PC-9 (cell line): ENCODE measurements at regions of chr12 and their contacts with region 1.

Region 1: DNA sequence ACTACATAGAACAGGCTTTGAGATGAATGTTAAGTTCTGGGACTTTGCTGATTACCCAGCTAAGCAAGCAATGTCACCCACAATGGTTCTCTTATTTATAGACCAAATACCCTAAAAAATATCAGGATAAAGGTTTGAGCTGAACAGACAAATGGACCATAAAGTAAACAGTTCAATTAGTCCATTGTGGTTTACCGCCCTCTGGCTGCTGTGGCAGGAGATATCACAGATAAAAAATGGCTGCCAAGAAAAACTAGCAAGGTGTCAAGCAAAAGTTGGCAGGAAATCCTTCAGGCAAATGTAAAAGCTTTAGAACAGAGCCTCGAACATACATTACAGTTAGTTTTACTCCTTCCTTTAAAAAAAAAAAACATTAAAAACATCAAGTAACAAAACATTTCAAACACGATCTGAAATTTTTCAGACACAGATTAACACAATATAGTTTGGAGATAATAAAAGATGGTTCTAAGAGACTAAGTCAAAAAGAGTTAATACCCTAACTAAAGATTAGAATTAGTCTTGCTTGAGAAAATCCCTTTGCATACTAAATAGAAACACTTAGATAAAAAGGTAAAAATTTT is 41.3 kb downstream of the MED13L start:
- DNase-seq: peak in 1 of 2 experiments; percentile 11
- H3K4me3 ChIP-seq: no peak overlapping the region
- H3K27ac ChIP-seq: no peak overlapping the region; the same call in 1 of the 2 replicates
- H3K4me1 ChIP-seq: peaks cover 9% of the 10 kb centered on the region; the same call in 1 of the 2 replicates
- H3K27me3 ChIP-seq: no peaks in the 10 kb centered on the region
- CTCF ChIP-seq: peak; percentile 70

Region 2: DNA sequence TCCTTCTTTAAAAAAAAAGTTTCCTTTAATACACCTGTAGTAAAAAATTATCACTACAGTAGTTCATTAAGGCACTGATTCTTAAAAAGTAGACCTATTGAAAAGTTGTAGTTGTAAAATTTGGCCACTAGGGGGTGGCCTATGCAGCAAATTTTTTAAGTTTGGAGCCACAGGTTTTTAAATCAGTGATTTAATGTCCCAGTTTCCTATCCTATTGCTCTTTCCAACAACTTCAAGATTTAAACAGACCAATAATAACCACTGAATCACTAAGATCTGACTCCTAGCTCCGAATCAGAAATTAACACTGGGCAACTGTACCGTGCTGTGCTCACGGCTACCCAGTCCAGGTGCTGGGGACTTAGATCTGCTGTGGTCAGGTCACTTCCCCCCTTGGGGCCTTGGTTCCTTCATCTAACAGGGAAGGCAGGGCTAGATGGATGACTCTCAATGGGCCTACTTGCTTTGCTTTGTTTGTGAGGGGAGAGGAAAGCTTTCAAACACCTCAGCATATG is 238.1 kb before region 1 on chr12:
- CTCF ChIA-PET with region 1: no interaction called
- POLR2A ChIA-PET with region 1: no interaction called
- intact Hi-C with region 1: loop called (anchors 5 kb)
- DNase-seq: peak in 1 of 2 experiments; percentile 2
- H3K4me3 ChIP-seq: no peak overlapping the region
- H3K27ac ChIP-seq: 0 out of 2 replicates have a peak overlapping the region, but pooled peaks have one; percentile 34
- H3K4me1 ChIP-seq: peaks cover 9% of the 10 kb centered on the region; the same call in 1 of the 2 replicates
- H3K27me3 ChIP-seq: no peaks in the 10 kb centered on the region
- CTCF ChIP-seq: peak; percentile 94

Region 3: GRCh38 chr12:116066381-116067230 is 169.6 kb before region 1 on chr12:
- CTCF ChIA-PET with region 1: no interaction called
- POLR2A ChIA-PET with region 1: no interaction called
- intact Hi-C with region 1: loop called (anchors 5 kb)
- DNase-seq: peak in 1 of 2 experiments; percentile 37
- H3K4me3 ChIP-seq: no peak overlapping the region
- H3K27ac ChIP-seq: no peak overlapping the region
- H3K4me1 ChIP-seq: no peaks in the 10 kb centered on the region
- H3K27me3 ChIP-seq: no peaks in the 10 kb centered on the region
- CTCF ChIP-seq: peak; percentile 82